Activated naive CD4-positive, alpha-beta T cell treated with anti-CD3 and anti-CD28 coated beads for 36 hours (primary cell): ENCODE measurements at regions of chr3 and their contacts with region 1.

Region 1: GRCh38 chr3:48556793-48557626 is at the start of gene PFKFB4:
- DNase-seq: peak; percentile 100
- H3K4me3 Mint-ChIP-seq: peak within 1 kb of the TSS; percentile 84
- H3K27ac Mint-ChIP-seq: peak within 1 kb of the TSS; percentile 50
- H3K4me1 Mint-ChIP-seq: peaks cover 11% of the 10 kb centered on the region
- H3K27me3 Mint-ChIP-seq: no peaks in the 10 kb centered on the region
- total RNA-seq, gene PFKFB4: 5.1 to 5.4 TPM

Region 2: GRCh38 chr3:48232734-48233133 is 324.3 kb before region 1 on chr3:
- CTCF ChIA-PET with region 1: interaction called, 3 read pairs
- intact Hi-C with region 1: loop called (anchors 2 kb)
- DNase-seq: peak; percentile 74
- H3K4me3 Mint-ChIP-seq: no peak overlapping the region
- H3K27ac Mint-ChIP-seq: no peak overlapping the region
- H3K4me1 Mint-ChIP-seq: no peaks in the 10 kb centered on the region
- H3K27me3 Mint-ChIP-seq: no peaks in the 10 kb centered on the region

Region 3: GRCh38 chr3:48301020-48301796 is 255.8 kb before region 1 on chr3:
- CTCF ChIA-PET with region 1: no interaction called
- intact Hi-C with region 1: loop called (anchors 2 kb)
- DNase-seq: peak; percentile 94
- H3K4me3 Mint-ChIP-seq: peak within 1 kb of the TSS; percentile 94
- H3K27ac Mint-ChIP-seq: peak within 1 kb of the TSS; percentile 96
- H3K4me1 Mint-ChIP-seq: peaks cover 28% of the 10 kb centered on the region
- H3K27me3 Mint-ChIP-seq: no peaks in the 10 kb centered on the region

Region 4: GRCh38 chr3:48472915-48473616 is 83.9 kb before region 1 on chr3:
- CTCF ChIA-PET with region 1: interaction called, 12 read pairs
- intact Hi-C with region 1: loop called (anchors 1 kb)
- DNase-seq: peak; percentile 99
- H3K4me3 Mint-ChIP-seq: peak overlapping the region; percentile 78
- H3K27ac Mint-ChIP-seq: peak overlapping the region; percentile 97
- H3K4me1 Mint-ChIP-seq: peaks cover 55% of the 10 kb centered on the region
- H3K27me3 Mint-ChIP-seq: no peaks in the 10 kb centered on the region

Region 5: GRCh38 chr3:48572517-48572916 is 15.5 kb after region 1 on chr3:
- CTCF ChIA-PET with region 1: no interaction called
- intact Hi-C with region 1: no loop called
- DNase-seq: no peak
- H3K4me3 Mint-ChIP-seq: no peak overlapping the region
- H3K27ac Mint-ChIP-seq: no peak overlapping the region
- H3K4me1 Mint-ChIP-seq: no peaks in the 10 kb centered on the region
- H3K27me3 Mint-ChIP-seq: no peaks in the 10 kb centered on the region

Region 6: GRCh38 chr3:48635222-48636021 is 78.4 kb after region 1 on chr3 and contains the start of gene SLC26A6:
- CTCF ChIA-PET with region 1: interaction called, 5 read pairs
- intact Hi-C with region 1: loop called (anchors 1 kb)
- DNase-seq: peak; percentile 97
- H3K4me3 Mint-ChIP-seq: peak within 1 kb of the TSS; percentile 89
- H3K27ac Mint-ChIP-seq: peak within 1 kb of the TSS; percentile 69
- H3K4me1 Mint-ChIP-seq: peaks cover 18% of the 10 kb centered on the region
- H3K27me3 Mint-ChIP-seq: no peaks in the 10 kb centered on the region
- total RNA-seq, gene SLC26A6: 24.3 to 24.7 TPM

Region 7: GRCh38 chr3:48685602-48686511 is 128.8 kb after region 1 on chr3 and contains the start of gene NCKIPSD:
- CTCF ChIA-PET with region 1: interaction called, 7 read pairs
- intact Hi-C with region 1: loop called (anchors 2 kb)
- DNase-seq: peak; percentile 91
- H3K4me3 Mint-ChIP-seq: peak within 1 kb of the TSS; percentile 83
- H3K27ac Mint-ChIP-seq: peak within 1 kb of the TSS; percentile 73
- H3K4me1 Mint-ChIP-seq: peaks cover 25% of the 10 kb centered on the region
- H3K27me3 Mint-ChIP-seq: no peaks in the 10 kb centered on the region
- total RNA-seq, gene NCKIPSD: 27.3 to 28.7 TPM

Region 8: DNA sequence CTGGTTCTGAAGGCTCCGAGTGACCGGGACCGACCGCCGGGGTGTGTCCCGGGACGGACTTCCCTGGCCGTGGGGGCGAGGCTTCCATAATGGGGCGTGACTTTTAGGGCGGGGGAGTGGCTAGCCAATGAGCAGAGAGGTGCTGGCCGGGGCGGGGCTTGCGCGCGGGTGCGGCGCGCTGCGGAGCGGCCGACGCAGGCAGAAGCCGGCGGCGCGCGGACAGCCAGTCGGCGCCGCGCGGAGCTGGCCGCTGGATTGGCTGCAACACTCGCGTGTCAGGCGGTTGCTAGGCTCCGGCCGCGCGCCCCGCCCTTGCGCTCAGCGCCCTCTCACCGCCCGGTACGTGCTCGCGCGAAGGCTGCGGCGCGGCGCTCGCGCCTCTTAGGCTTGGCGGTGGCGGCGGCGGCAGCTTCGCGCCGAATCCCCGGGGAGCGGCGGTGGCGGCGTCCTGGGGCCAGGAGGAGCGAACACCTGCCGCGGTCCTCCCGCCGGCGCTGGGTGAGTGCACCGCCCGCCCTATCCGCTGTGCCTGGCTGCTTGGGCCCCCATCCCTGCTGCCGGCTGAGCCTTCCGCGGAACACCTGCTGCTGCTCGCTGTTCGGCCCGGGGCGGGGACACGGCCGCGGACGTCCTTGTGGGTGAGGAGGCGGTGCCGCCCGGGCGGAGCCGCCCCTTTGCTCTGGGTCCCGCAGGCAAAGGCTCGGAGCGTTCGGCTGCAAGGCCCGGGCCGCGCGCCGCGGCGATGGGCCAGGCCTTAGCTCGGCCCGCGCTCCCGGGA is 913.1 kb after region 1 on chr3 and contains the start of gene DAG1:
- CTCF ChIA-PET with region 1: no interaction called
- intact Hi-C with region 1: loop called (anchors 2 kb)
- DNase-seq: peak; percentile 97
- H3K4me3 Mint-ChIP-seq: peak within 1 kb of the TSS; percentile 83
- H3K27ac Mint-ChIP-seq: peak within 1 kb of the TSS; percentile 85
- H3K4me1 Mint-ChIP-seq: peaks cover 14% of the 10 kb centered on the region
- H3K27me3 Mint-ChIP-seq: no peaks in the 10 kb centered on the region
- total RNA-seq, gene DAG1: 6.9 to 8.2 TPM